Uterus (tissue), 4 donors: ENCODE measurements at regions of chr16 and their contacts with region 1.

Region 1: GRCh38 chr16:70691223-70692129 is 5.6 kb upstream of the MTSS2 start:
- DNase-seq: peak; percentile 90 to 97
- H3K4me3 ChIP-seq: no peak overlapping the region
- H3K27ac ChIP-seq: peak overlapping the region; percentile 93 to 97
- H3K4me1 ChIP-seq: peaks cover 36 to 80% of the 10 kb centered on the region in 2 donors
- H3K27me3 ChIP-seq: no peaks in the 10 kb centered on the region
- CTCF ChIP-seq: no peak
- POLR2A ChIP-seq: peak in 1 of 2 donors; percentile 41

Region 2: DNA sequence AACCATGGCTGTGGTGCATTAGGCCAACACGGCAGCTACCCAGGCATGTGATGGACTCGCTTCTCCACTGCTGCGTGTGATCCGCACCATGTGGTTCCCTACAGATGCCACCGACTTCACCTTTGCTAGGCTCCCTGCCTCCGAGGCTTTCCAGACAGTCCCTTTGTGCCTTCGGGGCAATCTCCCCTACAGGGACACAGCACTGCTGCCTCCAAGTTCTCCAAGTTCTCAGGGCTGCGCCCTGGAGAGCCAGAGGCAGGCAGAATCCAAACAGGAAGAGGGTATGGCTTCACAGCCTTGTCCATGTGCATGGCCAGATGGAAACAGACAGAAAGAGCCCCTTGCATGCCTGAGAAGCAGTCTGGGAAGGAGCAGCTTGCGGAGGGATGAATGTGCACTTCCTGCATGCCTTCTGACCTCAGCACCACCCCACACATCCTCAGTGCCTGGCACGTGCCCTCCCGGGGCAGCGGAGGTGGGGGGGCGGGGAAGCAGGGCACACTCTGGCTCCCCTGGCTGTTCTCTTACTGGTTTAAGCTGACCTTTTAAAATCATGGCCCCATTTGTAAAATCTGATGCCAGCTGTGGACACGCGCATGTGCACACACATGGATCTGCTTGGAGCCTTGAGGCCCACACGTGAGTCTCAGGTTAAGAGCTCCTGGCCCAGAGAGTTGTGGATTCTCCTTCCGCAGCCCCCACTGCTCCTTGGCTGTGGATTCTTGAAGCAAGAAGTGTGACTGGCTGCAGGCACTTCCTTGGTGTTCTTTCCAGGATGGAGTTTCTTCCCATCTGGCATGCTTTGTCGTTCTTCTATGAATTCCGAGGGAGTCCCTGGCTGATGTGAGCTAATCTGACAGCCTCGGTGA is 49.7 kb after region 1 on chr16:
- intact Hi-C with region 1: loop called (anchors 5 kb)
- DNase-seq: peak in 1 of 2 donors; percentile 70
- H3K4me3 ChIP-seq: no peak overlapping the region
- H3K27ac ChIP-seq: peak overlapping the region; percentile 74 to 77
- H3K4me1 ChIP-seq: peaks cover 13 to 36% of the 10 kb centered on the region in 2 donors
- H3K27me3 ChIP-seq: no peaks in the 10 kb centered on the region
- CTCF ChIP-seq: no peak
- POLR2A ChIP-seq: no peak